Vagina (tissue), 2 donors: ENCODE measurements at regions of chr6 and their contacts with region 1.

Region 1: GRCh38 chr6:26122793-26123674 is 35.8 kb downstream of the HFE start:
- DNase-seq: peak in 1 of 2 donors; percentile 99
- H3K4me3 ChIP-seq: peak overlapping the region; percentile 79 to 95
- H3K27ac ChIP-seq: peak overlapping the region; percentile 89
- H3K4me1 ChIP-seq: peaks cover 17% of the 10 kb centered on the region
- H3K27me3 ChIP-seq: no peaks in the 10 kb centered on the region
- CTCF ChIP-seq: no peak
- POLR2A ChIP-seq: peak in 1 of 2 donors; percentile 82

Region 2: DNA sequence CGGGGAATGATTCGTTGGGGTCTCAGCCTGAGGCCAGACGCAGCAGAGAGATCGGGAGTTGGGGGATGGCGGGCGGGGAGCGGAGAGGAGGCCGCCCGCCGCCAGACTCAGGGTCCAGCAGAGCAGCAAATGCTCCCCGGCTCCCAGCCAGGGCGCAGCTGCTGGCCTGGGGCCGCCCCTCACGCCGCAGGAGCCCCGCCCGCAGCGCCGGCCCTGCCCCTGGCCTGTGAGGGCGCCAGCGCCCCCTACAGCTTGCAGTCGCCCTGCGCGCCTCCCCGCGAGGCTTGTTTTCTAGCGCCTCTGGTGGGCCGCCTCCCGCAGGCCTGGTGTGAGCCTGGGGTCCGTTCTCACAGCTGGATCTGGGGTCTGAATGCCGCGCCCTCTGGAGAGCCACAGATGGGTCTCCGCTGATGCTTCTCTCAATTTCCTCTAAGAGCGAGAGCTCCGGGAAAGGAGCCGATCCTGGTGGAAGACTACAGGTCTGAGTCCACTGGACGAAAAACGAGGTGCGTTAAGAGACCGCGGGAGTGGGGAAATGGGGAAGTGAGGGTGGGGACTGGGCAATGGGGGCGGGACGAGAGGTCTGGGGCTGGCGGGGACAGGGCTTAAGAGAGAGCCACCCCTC is 130.5 kb before region 1 on chr6:
- intact Hi-C with region 1: no loop called
- DNase-seq: peak in 1 of 2 donors; percentile 94
- H3K4me3 ChIP-seq: peak overlapping the region; percentile 60 to 66
- H3K27ac ChIP-seq: peak overlapping the region; percentile 90
- H3K4me1 ChIP-seq: peaks cover 20% of the 10 kb centered on the region
- H3K27me3 ChIP-seq: no peaks in the 10 kb centered on the region
- CTCF ChIP-seq: peak; percentile 94 to 99 (median 98)
- POLR2A ChIP-seq: peak in 1 of 2 donors; percentile 73

Region 3: GRCh38 chr6:26055670-26056582 is 67.1 kb before region 1 on chr6:
- intact Hi-C with region 1: loop called (anchors 2 kb)
- DNase-seq: peak in 1 of 2 donors; percentile 96
- H3K4me3 ChIP-seq: peak overlapping the region; percentile 63 to 69
- H3K27ac ChIP-seq: peak overlapping the region; percentile 81
- H3K4me1 ChIP-seq: peaks cover 15% of the 10 kb centered on the region
- H3K27me3 ChIP-seq: no peaks in the 10 kb centered on the region
- CTCF ChIP-seq: no peak
- POLR2A ChIP-seq: peak in 1 of 2 donors; percentile 98

Region 4: DNA sequence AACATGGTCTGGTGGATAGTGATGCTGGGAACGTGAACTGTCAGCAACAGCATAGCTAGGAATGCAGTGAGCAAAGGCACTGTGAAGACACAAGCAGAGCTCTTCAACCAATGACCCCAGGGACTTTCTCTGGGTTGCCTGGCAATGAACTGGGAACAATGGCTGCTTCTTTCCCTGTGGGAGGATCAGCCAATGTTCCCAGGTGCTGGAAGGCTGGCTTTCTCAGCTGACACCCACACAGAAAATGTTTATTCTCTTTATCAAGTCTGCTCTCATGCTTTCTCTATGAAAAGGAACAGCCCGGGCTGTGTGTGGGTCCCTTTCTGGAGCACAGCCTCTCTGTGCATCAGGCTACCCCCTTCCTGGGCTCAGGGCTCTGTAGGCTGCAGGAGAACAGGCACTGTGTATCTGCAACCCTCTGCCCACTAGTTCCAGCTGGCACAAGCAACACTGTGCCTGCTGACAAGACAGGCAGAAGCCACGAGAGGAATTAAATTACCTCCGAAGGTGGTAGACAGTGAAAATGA is 18.4 kb after region 1 on chr6:
- intact Hi-C with region 1: no loop called
- DNase-seq: no peak
- H3K4me3 ChIP-seq: no peak overlapping the region
- H3K27ac ChIP-seq: no peak overlapping the region
- H3K4me1 ChIP-seq: no peaks in the 10 kb centered on the region
- H3K27me3 ChIP-seq: no peaks in the 10 kb centered on the region
- CTCF ChIP-seq: no peak
- POLR2A ChIP-seq: no peak

Region 5: DNA sequence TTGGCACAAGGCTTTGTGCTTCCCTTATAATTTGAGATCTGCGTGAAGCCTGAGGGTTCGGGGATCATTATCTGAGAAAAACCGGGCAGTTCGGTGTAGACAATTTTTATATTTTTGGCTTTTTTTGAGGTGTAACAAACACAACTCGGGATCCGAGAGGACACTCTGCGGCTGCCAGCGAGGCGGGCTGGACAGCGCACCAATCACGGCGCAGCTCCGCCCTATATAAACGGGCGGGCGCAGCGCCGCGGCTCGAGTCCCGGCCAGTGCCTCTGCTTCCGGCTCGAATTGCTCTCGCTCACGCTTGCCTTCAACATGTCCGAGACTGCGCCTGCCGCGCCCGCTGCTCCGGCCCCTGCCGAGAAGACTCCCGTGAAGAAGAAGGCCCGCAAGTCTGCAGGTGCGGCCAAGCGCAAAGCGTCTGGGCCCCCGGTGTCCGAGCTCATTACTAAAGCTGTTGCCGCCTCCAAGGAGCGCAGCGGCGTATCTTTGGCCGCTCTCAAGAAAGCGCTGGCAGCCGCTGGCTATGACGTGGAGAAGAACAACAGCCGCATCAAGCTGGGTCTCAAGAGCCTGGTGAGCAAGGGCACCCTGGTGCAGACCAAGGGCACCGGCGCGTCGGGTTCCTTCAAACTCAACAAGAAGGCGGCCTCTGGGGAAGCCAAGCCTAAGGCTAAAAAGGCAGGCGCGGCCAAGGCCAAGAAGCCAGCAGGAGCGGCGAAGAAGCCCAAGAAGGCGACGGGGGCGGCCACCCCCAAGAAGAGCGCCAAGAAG is 33.2 kb after region 1 on chr6:
- intact Hi-C with region 1: loop called (anchors 1 kb)
- DNase-seq: peak in 1 of 2 donors; percentile 96
- H3K4me3 ChIP-seq: peak overlapping the region; percentile 51 to 72
- H3K27ac ChIP-seq: peak overlapping the region; percentile 88
- H3K4me1 ChIP-seq: peaks cover 28% of the 10 kb centered on the region
- H3K27me3 ChIP-seq: no peaks in the 10 kb centered on the region
- CTCF ChIP-seq: no peak
- POLR2A ChIP-seq: peak in 1 of 2 donors; percentile 100

Region 6: DNA sequence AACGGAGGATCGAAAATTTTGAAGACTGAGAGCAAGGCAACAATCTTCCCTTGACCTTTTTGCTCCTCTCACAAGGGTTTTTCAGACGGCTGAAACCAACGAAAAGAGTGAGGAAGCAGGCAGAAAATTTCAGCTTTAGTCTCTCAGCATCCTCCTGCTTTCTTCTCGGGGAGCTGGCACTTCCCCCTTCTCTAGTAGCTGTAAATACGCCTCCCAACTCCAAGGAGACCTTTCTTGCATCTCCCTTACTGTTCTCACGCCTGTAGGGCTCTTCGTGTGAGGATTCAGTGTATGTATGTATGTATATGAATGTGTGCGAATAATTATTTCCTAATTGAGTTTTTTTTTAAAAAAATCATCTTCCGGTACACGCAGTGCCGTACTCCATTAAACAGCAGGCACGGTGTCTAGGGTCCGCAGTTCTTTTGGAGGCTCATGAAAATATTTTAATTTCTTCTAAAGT is 49.5 kb after region 1 on chr6:
- intact Hi-C with region 1: loop called (anchors 5 kb)
- DNase-seq: no peak
- H3K4me3 ChIP-seq: peak overlapping the region; percentile 56 to 80
- H3K27ac ChIP-seq: peak overlapping the region; percentile 95
- H3K4me1 ChIP-seq: peaks cover 9% of the 10 kb centered on the region
- H3K27me3 ChIP-seq: no peaks in the 10 kb centered on the region
- CTCF ChIP-seq: no peak
- POLR2A ChIP-seq: peak in 1 of 2 donors; percentile 7

Region 7: DNA sequence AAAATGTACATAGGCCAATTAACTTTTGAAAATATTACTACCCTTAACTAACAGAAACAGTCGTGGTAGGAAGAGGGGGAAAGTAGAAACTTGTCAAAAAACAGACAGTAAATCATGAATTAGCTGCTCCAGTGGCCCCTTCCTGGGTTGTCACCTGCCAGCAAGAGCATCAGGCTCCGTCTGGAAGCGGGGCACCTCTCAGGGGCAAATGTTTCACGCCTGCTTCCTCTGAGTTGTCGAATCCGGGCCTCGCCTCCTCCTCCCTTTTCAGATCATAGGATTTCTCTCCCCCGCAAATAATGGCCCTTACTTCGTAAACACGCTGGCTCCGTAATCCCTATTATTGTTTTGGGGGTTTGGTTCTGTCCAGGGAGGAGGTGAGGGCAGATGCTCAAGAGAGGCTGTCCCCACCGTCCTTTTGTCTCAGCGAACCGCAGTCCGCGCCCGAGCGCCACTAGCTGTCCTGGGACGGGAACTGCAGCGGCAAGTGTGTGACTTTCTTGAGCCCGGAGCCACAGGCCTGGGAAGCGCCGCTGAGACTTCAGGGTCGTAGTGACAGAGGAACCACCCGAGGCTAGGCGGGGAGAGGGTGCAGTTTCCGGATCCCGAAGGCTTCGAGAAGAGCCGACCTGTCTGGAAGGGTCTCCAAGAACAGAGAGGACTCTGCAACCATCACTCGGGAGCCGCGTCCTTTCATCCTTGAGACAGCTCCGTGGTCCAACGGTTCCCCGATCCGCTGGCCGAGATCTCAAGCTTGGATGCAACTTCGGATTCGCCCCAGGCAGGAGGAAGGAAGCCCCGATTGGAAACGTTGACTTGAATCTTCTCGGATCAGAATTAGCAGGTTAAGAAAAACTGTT is 1564.3 kb after region 1 on chr6:
- intact Hi-C with region 1: loop called (anchors 10 kb)
- DNase-seq: no peak
- H3K4me3 ChIP-seq: peak overlapping the region; percentile 49 to 54
- H3K27ac ChIP-seq: peak overlapping the region; percentile 68
- H3K4me1 ChIP-seq: peaks cover 10% of the 10 kb centered on the region
- H3K27me3 ChIP-seq: no peaks in the 10 kb centered on the region
- CTCF ChIP-seq: peak in 1 of 3 experiments; percentile 17
- POLR2A ChIP-seq: no peak